A673 (cell line): ENCODE measurements at regions of chr22 and their contacts with region 1.

Region 1: DNA sequence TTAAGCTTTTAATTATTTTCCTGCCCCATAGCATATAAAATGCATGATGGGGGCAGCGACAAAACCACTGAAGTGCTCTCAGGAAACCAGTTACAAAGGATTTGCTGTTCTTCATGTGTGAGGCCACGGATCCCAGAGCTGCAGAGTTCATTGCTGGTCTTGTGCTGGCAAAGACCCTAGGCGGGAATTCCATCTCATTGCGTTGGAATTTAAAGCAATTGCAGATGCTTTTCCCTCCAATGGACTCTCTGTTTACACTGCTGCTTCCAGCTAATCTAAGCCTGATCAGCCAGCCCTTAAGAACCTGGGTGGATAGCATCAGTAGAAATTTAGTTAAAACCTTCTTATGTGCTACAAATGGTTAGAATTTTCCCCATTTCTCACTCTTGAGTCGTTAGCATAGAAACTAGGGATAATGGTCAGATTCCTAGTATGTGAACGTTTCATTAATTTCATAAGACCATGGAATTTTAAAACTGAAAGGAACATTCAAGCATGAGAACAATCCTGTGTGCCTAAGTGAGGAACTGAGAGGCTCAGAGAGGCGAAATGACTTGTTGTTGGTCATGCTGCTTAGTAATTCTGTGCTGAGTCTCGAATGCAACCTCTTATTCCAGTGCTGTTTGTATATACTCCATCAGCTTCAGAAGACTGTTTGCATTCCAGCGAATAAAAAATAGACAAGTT is 36.1 kb upstream of the ADSL start:
- DNase-seq: no peak
- H3K4me3 ChIP-seq: no peak overlapping the region
- H3K27ac ChIP-seq: no peak overlapping the region
- H3K4me1 ChIP-seq: no peaks in the 10 kb centered on the region
- H3K27me3 ChIP-seq: no peaks in the 10 kb centered on the region
- CTCF ChIP-seq: no peak

Region 2: GRCh38 chr22:39467390-39467895 is 842.8 kb before region 1 on chr22:
- CTCF ChIA-PET with region 1: no interaction called
- POLR2A ChIA-PET with region 1: interaction called, 19 read pairs
- intact Hi-C with region 1: no loop called
- DNase-seq: no peak
- H3K4me3 ChIP-seq: no peak overlapping the region
- H3K27ac ChIP-seq: no peak overlapping the region
- H3K4me1 ChIP-seq: peaks cover 14% of the 10 kb centered on the region
- H3K27me3 ChIP-seq: no peaks in the 10 kb centered on the region
- CTCF ChIP-seq: no peak

Region 3: DNA sequence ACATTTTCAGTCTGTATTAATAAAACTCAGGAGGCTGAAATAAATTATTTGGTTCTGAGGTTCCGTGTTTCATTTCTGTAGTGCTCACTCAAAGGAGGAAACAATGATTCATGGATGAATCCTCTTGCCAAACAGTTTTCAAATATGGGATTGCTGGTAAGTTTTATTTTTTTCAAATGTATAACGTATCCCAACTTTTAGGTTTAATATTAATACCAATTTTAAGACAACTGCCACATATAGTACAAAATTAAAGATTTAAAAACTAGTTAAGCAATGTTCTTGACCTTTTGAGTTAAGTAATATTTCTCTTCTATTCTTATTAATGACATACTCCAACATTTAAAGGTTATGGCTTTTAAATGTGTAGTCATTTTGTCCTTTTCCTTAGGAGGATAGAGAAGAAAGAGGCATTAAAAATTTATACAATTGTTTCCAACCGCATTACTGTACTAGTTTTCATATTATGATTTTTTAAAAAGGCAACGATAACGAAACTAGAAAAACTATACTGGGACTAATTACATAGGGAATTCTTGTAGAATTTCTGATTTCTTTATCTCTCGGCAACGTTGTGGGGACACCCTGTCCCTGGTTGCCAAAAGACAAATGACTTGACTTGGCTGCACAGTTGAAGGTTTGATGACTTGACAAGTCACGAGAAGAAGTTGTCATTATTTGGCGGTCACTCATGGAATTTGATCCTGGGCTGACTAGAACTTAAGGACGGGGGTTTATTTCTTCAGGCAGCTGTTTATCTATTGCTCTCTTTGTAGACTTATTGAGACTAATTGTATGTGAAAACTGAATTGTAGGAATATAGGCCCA is 33.0 kb before region 1 on chr22:
- CTCF ChIA-PET with region 1: no interaction called
- POLR2A ChIA-PET with region 1: no interaction called
- intact Hi-C with region 1: no loop called
- DNase-seq: no peak
- H3K4me3 ChIP-seq: no peak overlapping the region
- H3K27ac ChIP-seq: no peak overlapping the region
- H3K4me1 ChIP-seq: no peaks in the 10 kb centered on the region
- H3K27me3 ChIP-seq: no peaks in the 10 kb centered on the region
- CTCF ChIP-seq: no peak

Region 4: GRCh38 chr22:40588726-40589125 is 278.5 kb after region 1 on chr22:
- CTCF ChIA-PET with region 1: no interaction called
- POLR2A ChIA-PET with region 1: no interaction called
- intact Hi-C with region 1: no loop called
- DNase-seq: peak; percentile 27
- H3K4me3 ChIP-seq: no peak overlapping the region
- H3K27ac ChIP-seq: no peak overlapping the region
- H3K4me1 ChIP-seq: peaks cover 8% of the 10 kb centered on the region
- H3K27me3 ChIP-seq: no peaks in the 10 kb centered on the region
- CTCF ChIP-seq: no peak